Astrocyte of the cerebellum (primary cell): ENCODE measurements at regions of chr1 and their contacts with region 1.

Region 1: DNA sequence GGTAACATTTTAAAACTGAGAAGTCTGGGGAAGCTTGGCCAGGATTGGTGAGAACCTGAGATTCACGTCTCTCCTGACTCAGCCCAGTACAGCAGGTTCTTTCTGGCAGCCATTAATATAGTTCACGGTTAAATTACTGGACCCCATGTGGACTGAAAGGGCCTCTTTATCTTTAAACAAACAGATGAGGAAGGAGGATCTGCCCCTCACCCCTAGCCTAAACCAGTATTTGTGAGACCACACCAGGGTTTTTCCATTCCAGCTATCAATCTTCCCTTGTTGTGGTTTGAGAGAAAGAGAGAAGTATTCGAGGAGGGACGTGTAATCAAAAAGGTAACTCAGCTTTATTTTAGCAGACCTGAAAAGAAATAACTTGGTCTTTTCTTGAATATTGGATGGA is 137.1 kb downstream of the PROX1 start:
- DNase-seq: no peak
- H3K4me3 ChIP-seq: no peak overlapping the region
- CTCF ChIP-seq: no peak

Region 2: DNA sequence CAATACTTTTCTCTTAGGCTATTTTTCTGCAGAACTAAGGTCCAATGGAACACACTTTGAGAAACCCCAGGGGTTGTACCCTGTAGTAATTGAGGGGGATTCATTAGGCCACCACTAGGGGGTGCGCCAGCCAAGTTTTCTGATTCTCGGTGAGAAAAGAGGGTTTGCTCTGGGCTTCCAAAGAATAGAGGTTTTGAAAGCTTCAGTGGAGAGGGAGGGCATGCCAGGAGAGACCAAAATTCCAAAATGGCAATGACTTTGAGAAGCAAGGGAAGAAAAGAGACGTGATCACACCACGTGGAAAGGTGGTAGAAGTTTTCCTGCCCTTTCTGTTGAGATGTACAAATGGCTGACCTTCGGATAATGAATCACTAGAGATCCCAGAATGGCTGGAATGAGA is 750.5 kb before region 1 on chr1:
- in situ Hi-C with region 1: loop called (anchors 5 kb)
- DNase-seq: peak; percentile 23
- H3K4me3 ChIP-seq: no peak overlapping the region
- CTCF ChIP-seq: peak; percentile 92

Region 3: DNA sequence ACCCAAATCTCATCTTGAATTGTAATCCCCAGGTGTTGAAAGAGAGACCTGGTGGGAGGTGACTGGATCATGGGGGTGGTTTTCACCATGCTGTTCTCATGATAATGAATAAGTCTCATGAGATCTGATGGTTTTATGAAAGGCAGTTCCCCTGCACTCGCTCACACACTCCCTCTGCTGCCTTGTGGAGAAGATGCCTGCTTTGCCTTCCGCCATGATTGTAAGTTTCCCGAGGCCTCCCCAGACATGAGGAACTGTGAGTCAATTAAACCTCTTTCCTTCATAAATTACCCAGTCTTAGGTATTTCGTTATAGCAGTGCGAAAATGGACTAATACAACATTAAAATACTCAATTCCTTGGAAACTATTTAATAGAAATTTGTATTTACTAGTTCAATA is 38.0 kb before region 1 on chr1:
- in situ Hi-C with region 1: no loop called
- DNase-seq: no peak
- H3K4me3 ChIP-seq: no peak overlapping the region
- CTCF ChIP-seq: no peak